Activated naive CD4-positive, alpha-beta T cell treated with anti-CD3 and anti-CD28 coated beads for 36 hours (primary cell): ENCODE measurements at regions of chr10 and their contacts with region 1.

Region 1: DNA sequence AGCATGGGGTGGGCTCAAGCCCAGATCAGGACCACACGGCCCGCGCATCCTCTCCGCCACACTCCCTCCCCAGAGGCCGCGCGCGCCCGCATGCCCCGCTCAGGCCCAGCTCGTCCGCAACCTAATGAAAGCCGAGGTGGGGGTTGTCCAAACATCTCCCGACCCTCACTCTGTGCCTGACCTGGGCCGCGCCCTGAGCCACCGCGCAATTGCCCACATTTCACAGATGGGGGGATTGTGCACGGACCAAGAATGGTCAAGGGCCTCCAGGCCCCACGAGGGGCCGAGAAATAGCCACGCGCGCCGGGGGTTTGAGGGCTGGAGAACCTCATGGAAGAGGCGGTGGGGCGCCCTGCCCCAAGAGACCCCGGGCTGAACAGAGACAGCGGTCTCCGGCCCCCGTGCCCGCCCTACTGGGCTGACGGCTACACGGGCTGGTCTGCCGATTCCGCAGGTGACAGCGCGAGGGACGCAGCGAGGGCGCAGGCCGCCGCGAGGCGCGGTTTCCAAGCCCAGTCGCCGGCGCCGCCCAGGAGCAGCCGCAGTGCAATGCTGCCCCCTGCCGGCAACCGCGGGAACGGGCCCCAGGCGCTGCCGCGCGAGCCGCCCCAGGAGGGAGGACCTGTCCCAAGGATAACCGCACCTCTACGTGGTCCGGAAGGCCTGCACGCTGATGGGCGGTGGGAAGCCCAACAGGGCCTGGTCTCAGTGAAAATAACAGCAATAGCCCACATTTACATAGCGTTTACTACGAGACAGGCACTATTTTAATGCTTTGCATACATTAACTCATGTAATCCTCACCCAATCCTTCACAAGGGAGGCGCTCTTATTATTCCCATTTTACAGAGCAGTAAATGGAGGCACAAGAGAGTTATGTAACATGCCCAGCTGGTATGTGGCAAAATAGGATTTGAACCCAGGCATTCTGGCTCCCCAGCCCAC is 10.5 kb upstream of the GRID1 start:
- DNase-seq: peak; percentile 81
- H3K4me3 Mint-ChIP-seq: no peak overlapping the region
- H3K27ac Mint-ChIP-seq: no peak overlapping the region
- H3K4me1 Mint-ChIP-seq: peaks cover 2% of the 10 kb centered on the region
- H3K27me3 Mint-ChIP-seq: peaks cover 23% of the 10 kb centered on the region

Region 2: DNA sequence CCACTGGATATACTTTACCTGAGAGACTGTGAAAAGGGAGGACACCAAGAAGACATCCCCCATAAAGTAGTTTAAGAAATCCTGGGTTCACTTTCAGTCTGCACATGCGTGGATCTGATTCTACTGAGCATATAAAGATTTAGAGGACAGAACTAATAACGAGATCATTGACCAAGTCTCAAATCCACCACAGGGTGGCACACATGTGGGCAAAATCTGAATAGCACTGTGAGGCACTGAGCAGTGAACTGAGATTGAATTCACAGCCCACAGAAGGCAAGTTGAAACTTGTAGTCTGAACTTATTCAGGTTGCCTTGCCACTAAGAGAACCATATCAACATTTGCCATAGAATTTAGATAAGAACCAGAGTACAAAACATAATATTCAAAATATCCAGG is 829.1 kb before region 1 on chr10:
- CTCF ChIA-PET with region 1: no interaction called
- intact Hi-C with region 1: loop called (anchors 5 kb)
- DNase-seq: peak; percentile 42
- H3K4me3 Mint-ChIP-seq: no peak overlapping the region
- H3K27ac Mint-ChIP-seq: no peak overlapping the region
- H3K4me1 Mint-ChIP-seq: no peaks in the 10 kb centered on the region
- H3K27me3 Mint-ChIP-seq: peaks cover 5% of the 10 kb centered on the region

Region 3: GRCh38 chr10:85995791-85996190 is 381.3 kb before region 1 on chr10:
- CTCF ChIA-PET with region 1: no interaction called
- intact Hi-C with region 1: loop called (anchors 2 kb)
- DNase-seq: peak; percentile 30
- H3K4me3 Mint-ChIP-seq: no peak overlapping the region
- H3K27ac Mint-ChIP-seq: no peak overlapping the region
- H3K4me1 Mint-ChIP-seq: no peaks in the 10 kb centered on the region
- H3K27me3 Mint-ChIP-seq: peaks cover 14% of the 10 kb centered on the region

Region 4: GRCh38 chr10:86155054-86155921 is 221.8 kb before region 1 on chr10:
- CTCF ChIA-PET with region 1: no interaction called
- intact Hi-C with region 1: loop called (anchors 5 kb)
- DNase-seq: no peak
- H3K4me3 Mint-ChIP-seq: no peak overlapping the region
- H3K27ac Mint-ChIP-seq: no peak overlapping the region
- H3K4me1 Mint-ChIP-seq: no peaks in the 10 kb centered on the region
- H3K27me3 Mint-ChIP-seq: no peaks in the 10 kb centered on the region

Region 5: DNA sequence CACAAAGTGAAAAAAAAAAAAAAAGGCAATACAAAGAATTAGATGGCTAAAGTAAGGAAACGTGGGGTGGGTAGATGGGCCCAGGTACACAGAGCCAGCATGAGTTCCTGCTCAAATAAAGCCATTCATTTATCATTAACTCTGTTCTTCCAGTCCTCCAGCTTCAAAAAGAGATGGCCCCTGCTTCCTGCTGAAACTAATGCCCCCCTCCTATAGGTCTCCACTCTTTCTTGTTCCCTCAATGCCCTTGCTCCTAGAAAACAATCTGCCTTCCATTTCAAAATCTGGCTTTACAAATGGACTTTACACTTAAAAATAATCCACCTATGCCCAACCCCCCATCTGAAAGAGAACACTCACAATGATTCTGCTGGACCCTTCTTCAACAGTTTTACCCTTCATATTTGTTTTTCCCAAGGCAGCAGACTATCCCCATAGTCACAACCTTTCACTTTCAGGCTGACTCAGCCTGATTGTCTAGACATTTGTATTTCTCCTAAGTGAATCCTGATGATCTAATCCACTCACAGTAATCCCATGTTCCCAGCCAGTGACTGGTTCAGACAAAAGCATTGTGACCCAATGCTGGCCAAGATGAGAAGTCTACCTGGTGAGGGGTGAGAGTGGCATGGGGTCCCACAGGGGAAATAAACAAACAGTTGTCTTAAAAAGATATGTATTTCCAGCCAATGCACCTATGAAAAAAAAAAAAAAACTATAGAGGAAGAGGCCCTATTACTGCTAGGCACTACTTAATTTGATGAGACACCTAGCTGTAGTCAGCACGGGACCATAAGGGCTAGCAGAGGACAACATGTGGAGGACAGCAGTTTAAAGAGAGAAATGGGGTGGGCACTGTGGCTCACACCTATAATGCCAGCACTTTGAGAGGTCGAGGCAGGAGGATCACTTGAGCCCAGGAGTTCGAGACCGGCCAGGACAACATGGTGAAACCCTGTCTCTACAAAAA is 64.0 kb after region 1 on chr10:
- CTCF ChIA-PET with region 1: no interaction called
- intact Hi-C with region 1: no loop called
- DNase-seq: no peak
- H3K4me3 Mint-ChIP-seq: no peak overlapping the region
- H3K27ac Mint-ChIP-seq: peak overlapping the region; percentile 32
- H3K4me1 Mint-ChIP-seq: peaks cover 24% of the 10 kb centered on the region
- H3K27me3 Mint-ChIP-seq: no peaks in the 10 kb centered on the region

Region 6: DNA sequence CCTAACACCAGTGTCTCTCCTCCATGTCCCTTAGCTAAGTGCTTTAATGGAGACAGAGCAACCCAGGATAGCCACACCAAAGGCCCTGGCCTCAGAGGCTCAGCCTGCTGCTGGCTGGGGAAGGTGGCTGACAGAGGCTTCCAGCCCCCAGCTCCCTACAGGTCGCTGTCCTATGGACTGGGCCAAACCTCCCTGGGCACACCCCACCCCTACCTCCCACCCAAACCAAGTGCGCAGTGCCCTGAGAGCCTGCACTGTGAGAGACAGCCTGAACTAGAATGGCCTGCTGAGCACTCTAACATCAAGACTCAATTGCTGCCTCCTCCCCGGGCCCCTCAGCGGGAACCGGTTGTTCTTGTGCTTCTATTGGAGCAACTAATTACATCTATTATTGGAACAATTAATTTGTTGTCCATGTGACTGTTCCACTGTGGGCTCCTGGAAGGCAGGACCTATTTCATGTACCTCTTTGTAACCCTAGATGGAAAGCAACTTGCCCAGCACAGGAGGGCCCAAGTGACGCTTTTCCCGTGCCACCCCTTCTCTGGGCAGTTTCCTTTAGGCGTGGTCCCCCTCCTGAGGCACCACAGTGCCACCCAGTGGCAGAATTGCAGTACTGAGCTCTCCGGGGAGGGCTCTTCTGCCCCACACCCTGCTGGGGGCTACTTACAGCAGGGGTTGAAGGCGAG is 208.1 kb after region 1 on chr10:
- CTCF ChIA-PET with region 1: no interaction called
- intact Hi-C with region 1: loop called (anchors 1 kb)
- DNase-seq: peak; percentile 79
- H3K4me3 Mint-ChIP-seq: no peak overlapping the region
- H3K27ac Mint-ChIP-seq: no peak overlapping the region
- H3K4me1 Mint-ChIP-seq: no peaks in the 10 kb centered on the region
- H3K27me3 Mint-ChIP-seq: no peaks in the 10 kb centered on the region